Activated T-helper 1 cell treated with anti-CD3 and anti-CD28 coated beads, Interleukin-12 subunit alpha, Interleukin-12 subunit beta, Interleukin-2, Interleukin-4 antibody, amounts not matched to agents 30 ng/mL and 10 ng/mL and 1 ng/mL, durations not matched to agents 14 hours and 24 hours and 36 hours (primary cell): ENCODE measurements at regions of chr21 and their contacts with region 1.

Region 1: DNA sequence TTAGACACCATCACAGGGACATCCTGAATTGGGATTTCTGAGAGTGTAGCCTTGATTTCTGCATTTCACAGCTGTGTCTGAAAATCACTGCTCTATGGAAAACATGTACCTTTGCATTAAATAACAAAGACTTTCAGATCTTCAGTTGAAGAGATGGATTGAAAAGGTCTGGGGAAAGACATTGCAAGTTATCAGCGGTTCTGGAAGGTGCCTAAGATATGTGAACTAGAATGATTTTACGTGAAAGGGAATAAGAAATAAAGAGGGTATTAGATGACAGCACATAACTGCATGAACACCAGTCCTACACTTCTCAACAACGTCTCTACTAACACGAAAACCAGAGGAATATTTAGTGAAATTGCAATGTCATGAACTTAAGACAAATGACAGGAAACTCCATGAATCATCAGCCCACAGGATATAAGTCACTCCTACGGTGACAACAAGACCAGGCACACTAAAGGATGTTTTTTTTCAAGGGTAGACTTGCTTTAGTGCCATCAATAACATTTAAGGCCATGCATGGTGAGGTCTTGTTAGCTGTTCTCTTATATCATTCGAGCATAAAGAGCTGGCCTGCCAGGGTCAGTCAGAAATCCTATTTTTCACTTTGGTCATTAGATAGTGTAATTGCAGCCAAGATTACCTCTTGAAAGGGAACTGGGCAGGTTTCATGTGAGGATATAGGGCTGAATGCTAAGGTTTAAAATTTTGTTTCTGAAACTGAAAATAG is 283.1 kb downstream of the GRIK1 start:
- DNase-seq: peak; percentile 14
- H3K4me3 Mint-ChIP-seq: peak overlapping the region; percentile 45
- H3K27ac Mint-ChIP-seq: peak overlapping the region; percentile 82
- H3K4me1 Mint-ChIP-seq: peaks cover 39% of the 10 kb centered on the region
- H3K27me3 Mint-ChIP-seq: no peaks in the 10 kb centered on the region

Region 2: DNA sequence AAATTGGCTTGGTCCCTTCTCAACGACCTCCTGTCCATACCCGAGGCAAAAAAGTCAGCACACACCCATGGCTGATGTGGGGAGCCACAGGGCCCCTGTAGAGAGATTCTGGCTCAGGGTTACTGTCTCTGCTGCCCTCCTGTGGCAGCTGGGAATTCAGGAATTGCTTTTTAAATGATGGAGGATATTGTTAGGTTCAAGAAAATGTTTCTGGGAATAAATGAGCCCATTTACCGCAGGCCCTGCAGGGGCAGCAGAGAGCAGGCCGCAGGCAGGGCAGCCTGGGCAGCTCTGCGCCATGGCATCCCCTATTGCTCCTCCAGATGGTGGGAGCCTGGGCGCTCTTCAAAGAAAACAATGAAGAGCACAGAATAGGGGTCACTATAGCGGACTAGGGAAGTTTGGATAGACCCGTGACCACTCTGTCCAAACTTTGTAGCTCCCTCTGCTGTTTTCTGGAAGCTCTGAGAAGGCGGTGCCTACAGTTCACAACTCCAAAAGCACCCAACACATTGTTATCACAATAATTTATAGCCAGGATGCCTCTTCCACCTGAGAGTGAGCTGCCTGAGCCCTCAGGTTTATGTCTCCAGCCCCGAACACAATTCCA is 156.8 kb before region 1 on chr21:
- intact Hi-C with region 1: no loop called
- DNase-seq: no peak
- H3K4me3 Mint-ChIP-seq: no peak overlapping the region
- H3K27ac Mint-ChIP-seq: no peak overlapping the region
- H3K4me1 Mint-ChIP-seq: no peaks in the 10 kb centered on the region
- H3K27me3 Mint-ChIP-seq: no peaks in the 10 kb centered on the region

Region 3: DNA sequence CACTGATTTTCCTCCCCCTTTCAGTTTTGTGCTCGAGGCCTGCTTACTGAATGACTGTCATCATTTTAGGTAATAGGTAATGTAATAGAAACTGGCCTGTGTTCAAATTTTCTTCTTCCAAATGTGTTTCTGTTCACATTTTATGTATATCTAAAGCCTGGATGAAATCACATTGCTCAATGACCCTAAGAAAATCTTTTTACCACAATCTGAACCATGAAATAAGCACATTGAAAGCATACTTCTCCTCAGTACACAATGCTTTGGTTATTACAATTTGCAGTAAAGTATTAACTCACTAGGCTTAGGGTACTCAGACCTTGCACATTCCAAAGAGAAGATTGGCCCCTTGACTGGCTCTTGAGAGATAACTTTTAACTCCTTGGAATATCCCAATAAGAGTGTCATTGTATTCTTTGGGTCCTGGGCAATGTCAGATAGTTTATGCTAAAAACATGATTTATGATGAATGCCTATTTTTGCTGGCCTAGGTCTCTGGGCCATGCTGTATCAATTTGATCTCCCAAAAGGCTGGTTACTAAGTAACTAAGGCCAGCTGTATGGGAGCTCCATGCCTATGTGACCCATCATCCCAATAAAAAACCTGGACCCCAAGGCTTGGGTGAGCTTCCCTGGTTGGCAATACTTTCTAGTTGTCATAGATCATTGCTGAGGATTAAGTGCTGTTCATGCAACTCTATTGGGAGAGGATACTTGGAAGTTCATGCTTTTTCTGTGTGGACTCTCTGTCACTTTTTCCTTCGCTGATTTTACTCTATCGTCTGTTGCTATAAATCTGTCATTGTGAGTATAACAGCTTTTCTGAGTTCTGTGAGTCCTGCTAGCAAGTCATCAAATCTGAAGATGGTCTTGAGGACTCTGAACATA is 10.8 kb before region 1 on chr21:
- intact Hi-C with region 1: loop called (anchors 2 kb)
- DNase-seq: no peak
- H3K4me3 Mint-ChIP-seq: no peak overlapping the region
- H3K27ac Mint-ChIP-seq: no peak overlapping the region
- H3K4me1 Mint-ChIP-seq: no peaks in the 10 kb centered on the region
- H3K27me3 Mint-ChIP-seq: peaks cover 6% of the 10 kb centered on the region